Left ventricle myocardium inferior (tissue), 1 donor: ENCODE measurements at regions of chr6 and their contacts with region 1.

Region 1: GRCh38 chr6:56292505-56293181 is 45.3 kb upstream of the COL21A1 start:
- DNase-seq: no peak
- H3K4me3 ChIP-seq: no peak overlapping the region
- H3K27ac ChIP-seq: no peak overlapping the region
- H3K4me1 ChIP-seq: peaks cover 14% of the 10 kb centered on the region
- H3K27me3 ChIP-seq: no peaks in the 10 kb centered on the region
- CTCF ChIP-seq: peak; percentile 78

Region 2: GRCh38 chr6:55276745-55277530 is 1015.7 kb before region 1 on chr6:
- intact Hi-C with region 1: loop called (anchors 10 kb)
- DNase-seq: peak; percentile 20
- H3K4me3 ChIP-seq: peak overlapping the region; percentile 46
- H3K27ac ChIP-seq: peak overlapping the region; percentile 60
- H3K4me1 ChIP-seq: peaks cover 5% of the 10 kb centered on the region
- H3K27me3 ChIP-seq: no peaks in the 10 kb centered on the region
- CTCF ChIP-seq: peak; percentile 71

Region 3: GRCh38 chr6:55980627-55981211 is 311.9 kb before region 1 on chr6:
- intact Hi-C with region 1: loop called (anchors 5 kb)
- DNase-seq: no peak
- H3K4me3 ChIP-seq: no peak overlapping the region
- H3K27ac ChIP-seq: no peak overlapping the region
- H3K4me1 ChIP-seq: no peaks in the 10 kb centered on the region
- H3K27me3 ChIP-seq: no peaks in the 10 kb centered on the region
- CTCF ChIP-seq: peak; percentile 75